Prostate gland (tissue), 2 donors: ENCODE measurements at regions of chr5 and their contacts with region 1.

Region 1: GRCh38 chr5:149141224-149141956 is at the start of gene ABLIM3:
- DNase-seq: peak; percentile 45
- H3K4me3 ChIP-seq: peak within 1 kb of the TSS; percentile 62 to 65
- H3K27ac ChIP-seq: peak within 1 kb of the TSS; percentile 31 to 39
- H3K4me1 ChIP-seq: no peaks in the 10 kb centered on the region
- H3K27me3 ChIP-seq: no peaks in the 10 kb centered on the region
- CTCF ChIP-seq: peak; percentile 88 to 92 (median 88)
- POLR2A ChIP-seq: no peak
- total RNA-seq, gene ABLIM3: 9.0 to 11.7 TPM

Region 2: GRCh38 chr5:148887123-148887881 is 254.1 kb before region 1 on chr5:
- intact Hi-C with region 1: no loop called
- DNase-seq: no peak
- H3K4me3 ChIP-seq: no peak overlapping the region
- H3K27ac ChIP-seq: no peak overlapping the region
- H3K4me1 ChIP-seq: no peaks in the 10 kb centered on the region
- H3K27me3 ChIP-seq: no peaks in the 10 kb centered on the region
- CTCF ChIP-seq: no peak
- POLR2A ChIP-seq: no peak

Region 3: GRCh38 chr5:149228618-149229297 is 87.4 kb after region 1 on chr5:
- intact Hi-C with region 1: loop called (anchors 2 kb)
- DNase-seq: peak; percentile 49
- H3K4me3 ChIP-seq: no peak overlapping the region
- H3K27ac ChIP-seq: no peak overlapping the region
- H3K4me1 ChIP-seq: no peaks in the 10 kb centered on the region
- H3K27me3 ChIP-seq: no peaks in the 10 kb centered on the region
- CTCF ChIP-seq: peak in 3 of 4 experiments; percentile 72 to 86 (median 85)
- POLR2A ChIP-seq: no peak